Mucosa of descending colon (tissue), 3 donors: ENCODE measurements at regions of chr9 and their contacts with region 1.

Region 1: DNA sequence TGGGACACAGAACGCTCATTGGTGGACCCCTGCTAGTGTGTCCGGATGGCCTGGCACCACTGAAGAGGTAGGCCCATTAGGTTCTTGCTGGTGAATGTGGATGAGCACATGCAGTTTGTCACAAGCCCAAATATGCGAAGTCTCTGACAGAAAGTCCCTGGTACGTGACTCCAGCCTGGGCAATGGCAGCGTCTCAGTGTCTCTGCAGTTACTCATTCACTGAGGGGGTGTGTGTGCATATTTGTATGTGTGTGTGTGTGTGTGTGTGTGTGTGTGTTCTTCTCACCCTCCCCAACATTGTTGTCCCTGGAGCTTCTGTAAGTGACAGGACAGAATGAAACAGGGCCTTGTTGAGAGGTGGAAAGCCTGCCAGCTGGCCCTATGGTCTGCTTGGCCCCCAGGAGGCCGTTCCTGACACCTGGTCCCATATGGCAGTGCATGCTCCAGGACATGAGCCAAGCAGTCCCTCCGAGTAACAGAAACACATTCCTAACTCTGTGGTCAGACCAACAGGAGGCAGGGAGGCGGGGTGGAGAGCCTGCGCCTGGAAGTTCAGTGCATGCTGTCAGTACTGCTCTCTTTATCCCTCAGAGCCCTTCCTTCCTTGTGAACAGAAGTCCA is 169.9 kb downstream of the SLC28A3 start:
- DNase-seq: peak; percentile 70 to 76 (median 76)
- ATAC-seq: peak; percentile 98
- H3K4me3 ChIP-seq: no peak overlapping the region
- H3K4me1 ChIP-seq: no peaks in the 10 kb centered on the region
- CTCF ChIP-seq: no peak

Region 2: GRCh38 chr9:83979812-83980394 is 190.7 kb before region 1 on chr9 and contains the start of gene HNRNPK:
- intact Hi-C with region 1: loop called in 1 of 2 experiments (anchors 10 kb)
- DNase-seq: peak; percentile 99 to 100 (median 99)
- ATAC-seq: peak; percentile 93
- H3K4me3 ChIP-seq: peak within 1 kb of the TSS; percentile 92
- H3K4me1 ChIP-seq: peaks cover 17% of the 10 kb centered on the region
- CTCF ChIP-seq: no peak
- total RNA-seq, gene HNRNPK: 386 to 461 (median 421) TPM

Region 3: DNA sequence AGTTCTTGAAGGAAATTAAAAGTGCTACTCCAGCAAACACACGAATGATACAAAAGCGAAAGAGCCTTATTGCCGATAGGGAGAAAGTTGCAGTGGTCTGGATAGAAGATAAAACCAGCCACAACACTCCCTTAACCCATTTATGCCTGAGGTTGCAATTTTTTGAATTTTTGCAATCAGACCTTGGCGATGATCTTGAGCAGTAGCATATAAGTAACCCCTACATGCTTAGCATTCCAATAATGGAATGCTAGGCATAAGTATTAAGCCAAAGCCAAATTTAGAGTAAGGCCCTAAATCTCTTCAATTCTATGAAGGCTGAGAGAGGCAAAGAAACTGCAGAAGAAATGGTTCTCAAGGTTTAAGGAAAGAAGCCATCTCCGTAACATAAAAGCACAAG is 16.5 kb after region 1 on chr9:
- intact Hi-C with region 1: no loop called
- DNase-seq: no peak
- ATAC-seq: no peak
- H3K4me3 ChIP-seq: no peak overlapping the region
- H3K4me1 ChIP-seq: no peaks in the 10 kb centered on the region
- CTCF ChIP-seq: no peak